WTC11 (cell line): ENCODE measurements at regions of chr2 and their contacts with region 1.

Region 1: GRCh38 chr2:65129826-65130663 is at the start of gene RAB1A:
- DNase-seq: peak; percentile 99
- ATAC-seq: peak; percentile 93
- H3K4me3 Mint-ChIP-seq: peak within 1 kb of the TSS; percentile 100
- H3K27ac Mint-ChIP-seq: peak within 1 kb of the TSS; percentile 99
- H3K4me1 Mint-ChIP-seq: peaks cover 43% of the 10 kb centered on the region
- H3K27me3 Mint-ChIP-seq: no peaks in the 10 kb centered on the region
- CTCF ChIP-seq: no peak
- total RNA-seq, gene RAB1A: 112 to 114 TPM (median 113 TPM) in 3 replicates

Region 2: GRCh38 chr2:65056215-65057053 is 73.6 kb before region 1 on chr2 and contains the start of gene CEP68:
- CTCF ChIA-PET with region 1: interaction called, 13 read pairs
- POLR2A ChIA-PET with region 1: interaction called, 12 read pairs
- DNase-seq: peak; percentile 97
- ATAC-seq: peak; percentile 96
- H3K4me3 Mint-ChIP-seq: peak within 1 kb of the TSS; percentile 94
- H3K27ac Mint-ChIP-seq: peak within 1 kb of the TSS; percentile 83
- H3K4me1 Mint-ChIP-seq: peaks cover 33% of the 10 kb centered on the region
- H3K27me3 Mint-ChIP-seq: no peaks in the 10 kb centered on the region; the same call in 1 of the 2 replicates
- CTCF ChIP-seq: no peak
- total RNA-seq, gene CEP68: 14.6 to 16.7 TPM (median 15.3 TPM) in 3 replicates

Region 3: DNA sequence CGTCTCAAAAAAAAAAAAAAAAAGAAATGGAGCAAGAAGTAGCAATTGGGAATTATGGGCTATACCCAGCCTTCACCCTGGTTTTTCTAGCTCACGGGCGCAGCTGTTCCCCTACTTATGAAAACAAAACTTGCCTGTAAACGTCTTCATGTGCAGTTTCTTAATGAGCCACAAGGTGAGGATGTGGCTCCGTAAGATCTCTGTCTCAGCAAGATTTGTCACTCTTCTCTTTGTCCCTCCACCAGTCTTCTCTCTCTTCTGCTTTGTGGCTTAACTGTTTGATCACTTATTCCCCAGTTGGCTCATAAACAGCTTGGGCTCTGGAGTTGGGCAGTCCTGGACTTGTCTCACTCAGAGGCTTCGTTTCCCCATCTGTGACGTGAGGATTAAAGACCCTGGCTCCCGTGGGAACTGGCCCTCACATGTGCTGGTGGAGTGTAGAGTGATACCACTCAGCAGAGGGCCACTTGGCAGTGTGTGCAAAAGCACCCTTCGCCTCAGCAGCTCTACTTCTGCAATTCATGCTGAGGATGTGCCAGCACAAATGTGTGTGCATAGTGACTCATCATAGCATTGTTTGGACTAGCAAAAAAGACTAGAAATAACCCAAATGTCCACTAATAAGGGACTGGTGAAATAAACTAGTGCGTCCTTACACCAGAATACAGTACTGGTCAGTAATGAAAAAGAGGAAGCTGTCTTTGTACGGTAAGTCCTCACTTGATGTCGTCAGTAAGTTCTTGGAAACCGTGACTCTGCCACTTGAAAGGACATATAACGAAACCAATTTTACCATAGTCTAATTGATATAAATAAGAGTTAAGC is 65.1 kb before region 1 on chr2:
- CTCF ChIA-PET with region 1: interaction called, 11 read pairs
- POLR2A ChIA-PET with region 1: no interaction called
- DNase-seq: no peak
- ATAC-seq: peak; percentile 76
- H3K4me3 Mint-ChIP-seq: no peak overlapping the region
- H3K27ac Mint-ChIP-seq: peak overlapping the region; percentile 59
- H3K4me1 Mint-ChIP-seq: peaks cover 12% of the 10 kb centered on the region; the same call in 1 of the 2 replicates
- H3K27me3 Mint-ChIP-seq: no peaks in the 10 kb centered on the region
- CTCF ChIP-seq: peak; percentile 35; the same call in 1 of the 2 replicates

Region 4: GRCh38 chr2:65070172-65070830 is 59.7 kb before region 1 on chr2:
- CTCF ChIA-PET with region 1: interaction called, 10 read pairs
- POLR2A ChIA-PET with region 1: interaction called, 3 read pairs
- DNase-seq: no peak
- ATAC-seq: peak; percentile 54
- H3K4me3 Mint-ChIP-seq: no peak overlapping the region
- H3K27ac Mint-ChIP-seq: peak overlapping the region; percentile 61; the same call in 1 of the 2 replicates
- H3K4me1 Mint-ChIP-seq: peaks cover 8% of the 10 kb centered on the region
- H3K27me3 Mint-ChIP-seq: no peaks in the 10 kb centered on the region
- CTCF ChIP-seq: no peak

Region 5: DNA sequence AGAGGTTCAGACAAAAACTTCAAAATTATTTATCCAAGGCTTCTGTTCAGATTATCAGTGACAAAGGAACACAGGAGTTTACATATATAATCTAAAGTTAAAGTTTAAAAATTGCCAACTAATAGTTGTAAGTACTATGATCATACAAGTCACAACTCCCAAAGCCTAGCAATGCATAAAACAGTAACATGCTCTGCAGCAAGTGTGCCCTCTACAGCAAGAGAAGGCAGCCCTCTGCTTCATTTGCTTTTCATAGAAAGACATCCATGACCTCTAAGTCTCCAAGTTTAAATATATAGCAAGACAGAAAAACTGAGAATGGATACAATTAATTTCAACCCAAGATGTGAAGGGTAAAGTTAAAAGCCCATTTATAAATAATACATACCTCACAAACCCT is 13.4 kb before region 1 on chr2:
- CTCF ChIA-PET with region 1: interaction called, 6 read pairs
- POLR2A ChIA-PET with region 1: interaction called, 15 read pairs
- DNase-seq: no peak
- ATAC-seq: peak; percentile 38; the same call in 1 of the 2 replicates
- H3K4me3 Mint-ChIP-seq: no peak overlapping the region
- H3K27ac Mint-ChIP-seq: no peak overlapping the region
- H3K4me1 Mint-ChIP-seq: peaks cover 17% of the 10 kb centered on the region
- H3K27me3 Mint-ChIP-seq: no peaks in the 10 kb centered on the region
- CTCF ChIP-seq: no peak

Region 6: GRCh38 chr2:65169760-65170136 is 39.7 kb after region 1 on chr2:
- CTCF ChIA-PET with region 1: interaction called, 20 read pairs
- POLR2A ChIA-PET with region 1: interaction called, 4 read pairs
- DNase-seq: no peak
- ATAC-seq: no peak
- H3K4me3 Mint-ChIP-seq: no peak overlapping the region
- H3K27ac Mint-ChIP-seq: no peak overlapping the region
- H3K4me1 Mint-ChIP-seq: no peaks in the 10 kb centered on the region
- H3K27me3 Mint-ChIP-seq: no peaks in the 10 kb centered on the region
- CTCF ChIP-seq: no peak

Region 7: GRCh38 chr2:65186872-65187851 is 57.1 kb after region 1 on chr2:
- CTCF ChIA-PET with region 1: interaction called, 15 read pairs
- POLR2A ChIA-PET with region 1: no interaction called
- DNase-seq: peak; percentile 82
- ATAC-seq: peak; percentile 98
- H3K4me3 Mint-ChIP-seq: no peak overlapping the region
- H3K27ac Mint-ChIP-seq: no peak overlapping the region; the same call in 1 of the 2 replicates
- H3K4me1 Mint-ChIP-seq: peaks cover 6% of the 10 kb centered on the region
- H3K27me3 Mint-ChIP-seq: peaks cover 16% of the 10 kb centered on the region
- CTCF ChIP-seq: peak; percentile 45; the same call in 1 of the 2 replicates

Region 8: GRCh38 chr2:65666156-65666725 is 536.2 kb after region 1 on chr2:
- CTCF ChIA-PET with region 1: no interaction called
- POLR2A ChIA-PET with region 1: no interaction called
- DNase-seq: no peak
- ATAC-seq: no peak
- H3K4me3 Mint-ChIP-seq: no peak overlapping the region
- H3K27ac Mint-ChIP-seq: no peak overlapping the region
- H3K4me1 Mint-ChIP-seq: no peaks in the 10 kb centered on the region; the same call in 1 of the 2 replicates
- H3K27me3 Mint-ChIP-seq: peaks cover 11% of the 10 kb centered on the region
- CTCF ChIP-seq: no peak

Region 9: GRCh38 chr2:65765376-65765775 is 635.3 kb after region 1 on chr2:
- CTCF ChIA-PET with region 1: no interaction called
- POLR2A ChIA-PET with region 1: no interaction called
- DNase-seq: no peak
- ATAC-seq: no peak
- H3K4me3 Mint-ChIP-seq: no peak overlapping the region
- H3K27ac Mint-ChIP-seq: no peak overlapping the region
- H3K4me1 Mint-ChIP-seq: no peaks in the 10 kb centered on the region; the same call in 1 of the 2 replicates
- H3K27me3 Mint-ChIP-seq: no peaks in the 10 kb centered on the region
- CTCF ChIP-seq: no peak